ENCODE measurements at regions of chr12 and their contacts with region 1.

Region 1: DNA sequence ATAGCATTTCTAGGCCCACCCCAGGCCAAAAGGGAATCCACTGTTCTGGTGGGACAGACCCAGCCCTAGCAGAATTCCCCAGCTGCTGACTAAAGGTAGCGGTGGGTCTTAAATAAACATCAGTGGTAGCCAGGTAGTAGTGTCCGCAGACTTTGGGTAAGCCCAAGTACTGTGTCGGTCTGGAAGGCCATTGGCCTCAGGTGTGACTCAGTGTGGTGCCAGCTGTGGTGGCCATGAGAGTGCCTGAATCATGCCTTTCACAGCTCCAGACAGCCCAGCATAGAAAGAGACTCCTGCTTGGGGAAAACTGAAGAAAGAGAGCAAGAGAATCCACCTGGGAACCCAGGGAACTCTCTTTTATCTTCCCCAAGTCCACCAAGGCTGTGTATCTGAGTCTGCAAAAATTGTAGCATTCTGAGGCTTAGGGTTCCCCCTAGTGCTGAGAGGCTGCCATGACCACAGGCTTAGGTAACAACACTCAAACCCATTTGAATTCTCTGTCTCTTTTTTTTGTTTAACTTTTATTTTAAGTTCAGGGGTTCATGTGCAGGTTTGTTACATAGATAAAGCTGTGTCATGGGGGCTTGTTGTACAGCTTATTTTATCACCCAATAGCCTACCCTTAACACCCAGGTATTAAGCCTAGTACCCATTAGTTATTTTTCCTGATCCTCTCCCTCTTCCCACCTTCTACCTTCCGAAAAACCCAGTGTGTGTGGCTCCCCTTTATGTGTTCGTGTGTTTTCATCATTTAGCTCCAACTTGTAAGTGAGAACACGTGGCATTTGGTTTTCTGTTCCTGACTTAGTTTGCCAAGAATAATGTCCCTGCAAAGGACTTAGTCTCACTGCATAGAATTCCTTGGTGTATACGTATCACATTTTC is 16.7 kb upstream of the CD163L1 start:
- DNase-seq: peak; percentile 68
- H3K4me3 ChIP-seq: no peak overlapping the region
- H3K27ac ChIP-seq: no peak overlapping the region
- H3K4me1 ChIP-seq: no peaks in the 10 kb centered on the region
- H3K27me3 ChIP-seq: no peaks in the 10 kb centered on the region
- CTCF ChIP-seq: peak; percentile 86

Region 2: GRCh38 chr12:7142056-7142644 is 318.5 kb before region 1 on chr12:
- CTCF ChIA-PET with region 1: no interaction called
- POLR2A ChIA-PET with region 1: no interaction called
- intact Hi-C with region 1: loop called (anchors 2 kb)
- DNase-seq: peak; percentile 80
- H3K4me3 ChIP-seq: no peak overlapping the region
- H3K27ac ChIP-seq: no peak overlapping the region
- H3K4me1 ChIP-seq: no peaks in the 10 kb centered on the region
- H3K27me3 ChIP-seq: no peaks in the 10 kb centered on the region
- CTCF ChIP-seq: peak; percentile 85

Region 3: DNA sequence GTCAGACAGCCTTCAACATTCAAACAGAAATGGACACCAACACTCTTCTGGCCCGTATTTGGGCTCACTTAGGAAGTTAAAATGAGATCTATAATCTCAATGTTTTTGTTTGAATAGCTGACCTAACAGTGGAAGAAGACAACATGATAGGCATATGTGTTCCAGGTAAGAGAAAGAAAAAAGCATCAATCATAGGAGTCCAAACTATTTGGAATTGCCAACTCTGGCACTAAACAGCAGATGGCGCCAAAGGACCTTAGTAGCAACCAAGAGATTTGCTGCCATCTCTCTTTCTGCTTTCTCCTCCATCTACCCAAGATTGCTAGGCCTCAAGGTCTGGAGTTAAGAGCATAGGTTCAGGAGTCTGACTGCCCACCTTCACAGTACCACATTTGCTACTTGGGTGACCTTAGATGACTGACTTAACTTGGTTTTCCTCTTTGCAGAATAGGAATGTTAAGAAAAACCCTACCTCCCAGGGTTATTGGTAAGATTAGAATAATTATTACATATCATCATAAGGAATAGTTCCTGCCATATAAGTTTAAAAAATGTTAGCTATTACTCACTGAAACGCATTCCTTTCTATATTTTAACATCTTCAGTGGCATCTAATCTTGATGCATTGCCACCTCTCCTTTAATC is 240.9 kb before region 1 on chr12:
- CTCF ChIA-PET with region 1: no interaction called
- POLR2A ChIA-PET with region 1: no interaction called
- intact Hi-C with region 1: loop called (anchors 1 kb)
- DNase-seq: peak; percentile 75
- H3K4me3 ChIP-seq: no peak overlapping the region
- H3K27ac ChIP-seq: no peak overlapping the region
- H3K4me1 ChIP-seq: no peaks in the 10 kb centered on the region
- H3K27me3 ChIP-seq: no peaks in the 10 kb centered on the region
- CTCF ChIP-seq: peak; percentile 88

Region 4: DNA sequence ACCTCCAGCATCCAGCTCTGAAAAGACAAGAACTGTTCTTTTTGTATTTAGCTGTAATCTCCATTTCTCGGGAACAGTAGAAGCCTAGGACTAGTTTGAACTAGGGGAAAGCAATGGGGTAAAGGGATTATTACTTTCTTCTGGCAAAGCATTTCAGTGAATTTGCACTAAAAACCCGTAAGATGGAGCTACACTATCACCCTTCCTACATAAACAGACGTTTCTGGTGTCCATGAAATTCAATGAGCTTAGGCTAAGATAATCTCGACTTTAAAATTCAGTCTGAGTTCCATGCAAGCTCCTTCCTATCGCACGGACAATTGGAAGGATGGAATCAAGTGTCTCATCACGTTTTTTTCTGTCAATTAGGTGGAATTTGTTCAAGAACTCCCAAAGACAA is 132.7 kb before region 1 on chr12:
- CTCF ChIA-PET with region 1: no interaction called
- POLR2A ChIA-PET with region 1: no interaction called
- intact Hi-C with region 1: loop called (anchors 2 kb)
- DNase-seq: peak; percentile 11
- H3K4me3 ChIP-seq: no peak overlapping the region
- H3K27ac ChIP-seq: no peak overlapping the region
- H3K4me1 ChIP-seq: no peaks in the 10 kb centered on the region
- H3K27me3 ChIP-seq: peaks cover 21% of the 10 kb centered on the region
- CTCF ChIP-seq: no peak

Region 5: DNA sequence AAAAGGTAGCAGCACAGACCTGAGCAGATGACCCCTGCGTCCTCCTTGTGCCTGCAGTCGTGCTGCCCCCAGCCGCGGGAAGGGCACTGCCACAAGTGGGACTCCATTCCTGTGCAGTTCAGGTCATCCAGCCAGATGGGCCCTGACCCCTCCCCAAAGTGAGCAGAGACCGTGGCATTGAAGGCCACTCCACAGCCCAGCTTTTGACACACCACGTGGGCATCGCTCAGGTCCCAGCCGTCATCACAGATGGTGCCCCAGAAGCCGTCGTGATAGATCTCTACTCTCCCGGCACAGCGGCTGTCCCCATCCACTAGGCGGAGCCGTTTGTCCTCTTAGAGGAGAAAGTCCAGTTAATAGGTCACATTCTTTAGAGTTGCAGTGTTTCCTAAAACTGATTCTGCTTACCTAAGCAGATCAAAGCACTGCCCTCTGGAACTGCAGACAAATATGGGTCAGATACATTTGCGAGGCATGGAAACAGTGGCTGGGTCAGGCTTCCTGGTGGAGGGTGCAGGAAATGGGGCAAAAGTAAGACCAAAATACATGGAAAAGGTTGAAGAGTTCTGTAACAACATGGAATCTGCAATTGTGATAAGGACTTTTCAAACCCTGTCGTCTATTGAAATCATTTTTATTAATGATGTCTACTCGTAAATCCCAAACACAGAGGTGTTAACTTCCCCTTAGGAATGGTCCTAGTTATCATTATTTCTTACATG is 86.0 kb before region 1 on chr12:
- CTCF ChIA-PET with region 1: no interaction called
- POLR2A ChIA-PET with region 1: no interaction called
- intact Hi-C with region 1: loop called (anchors 5 kb)
- DNase-seq: peak; percentile 48
- H3K4me3 ChIP-seq: no peak overlapping the region
- H3K27ac ChIP-seq: no peak overlapping the region
- H3K4me1 ChIP-seq: no peaks in the 10 kb centered on the region
- H3K27me3 ChIP-seq: peaks cover 15% of the 10 kb centered on the region
- CTCF ChIP-seq: peak; percentile 55; the same call in 1 of the 2 replicates

Region 6: GRCh38 chr12:7479771-7480170 is 19.2 kb after region 1 on chr12:
- CTCF ChIA-PET with region 1: no interaction called
- POLR2A ChIA-PET with region 1: no interaction called
- intact Hi-C with region 1: no loop called
- DNase-seq: no peak
- H3K4me3 ChIP-seq: no peak overlapping the region
- H3K27ac ChIP-seq: no peak overlapping the region
- H3K4me1 ChIP-seq: no peaks in the 10 kb centered on the region
- H3K27me3 ChIP-seq: no peaks in the 10 kb centered on the region
- CTCF ChIP-seq: no peak

Region 7: GRCh38 chr12:7638760-7639555 is 178.3 kb after region 1 on chr12:
- CTCF ChIA-PET with region 1: no interaction called
- POLR2A ChIA-PET with region 1: no interaction called
- intact Hi-C with region 1: loop called (anchors 2 kb)
- DNase-seq: peak; percentile 91
- H3K4me3 ChIP-seq: peak overlapping the region; percentile 27
- H3K27ac ChIP-seq: no peak overlapping the region
- H3K4me1 ChIP-seq: no peaks in the 10 kb centered on the region
- H3K27me3 ChIP-seq: no peaks in the 10 kb centered on the region
- CTCF ChIP-seq: peak; percentile 75